Common myeloid progenitor, CD34-positive (primary cell): ENCODE measurements at regions of chr1 and their contacts with region 1.

Region 1: GRCh38 chr1:201511941-201512539 is 5.1 kb upstream of the CSRP1 start:
- DNase-seq: peak in 2 of 3 donors; percentile 19 to 23
- H3K4me3 ChIP-seq: no peak overlapping the region
- H3K27ac ChIP-seq: no peak overlapping the region
- H3K4me1 ChIP-seq: peaks cover 0 to 30% (median 22%) of the 10 kb centered on the region in 4 experiments
- H3K27me3 ChIP-seq: no peaks in the 10 kb centered on the region

Region 2: GRCh38 chr1:201436393-201436792 is 75.6 kb before region 1 on chr1:
- CTCF ChIA-PET with region 1: interaction called, 30 read pairs
- POLR2A ChIA-PET with region 1: interaction called, 4 read pairs
- DNase-seq: no peak
- H3K4me3 ChIP-seq: no peak overlapping the region
- H3K27ac ChIP-seq: no peak overlapping the region
- H3K4me1 ChIP-seq: peaks cover 0 to 5% (median 3%) of the 10 kb centered on the region in 4 experiments
- H3K27me3 ChIP-seq: peaks cover 0 to 3% (median 0%) of the 10 kb centered on the region in 5 experiments

Region 3: DNA sequence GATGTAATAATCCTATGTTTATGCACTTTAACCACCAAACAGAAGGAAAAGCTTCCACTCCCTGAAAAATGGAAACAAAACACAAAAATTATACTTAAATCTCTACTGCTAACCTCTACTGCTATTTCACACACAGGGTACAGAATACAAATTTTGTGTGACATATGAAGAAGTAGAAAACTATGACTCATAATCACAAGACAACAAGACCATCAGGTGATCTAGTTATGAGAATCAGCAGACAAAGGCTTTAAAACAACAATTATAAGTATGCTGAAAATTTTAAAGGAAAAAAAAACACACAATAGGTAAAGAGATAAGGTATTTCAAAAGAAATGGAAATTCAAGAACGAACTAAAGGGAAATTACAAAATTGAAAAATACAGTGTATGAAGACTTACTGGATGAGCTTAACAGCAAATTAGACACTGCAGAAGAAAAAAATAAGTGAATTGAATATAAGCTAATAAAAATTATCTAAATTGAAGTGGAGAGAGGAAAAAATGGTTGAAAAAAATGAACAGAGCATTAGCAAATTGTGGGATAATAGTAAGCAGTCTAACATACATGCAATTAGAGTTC is 13.2 kb after region 1 on chr1:
- CTCF ChIA-PET with region 1: interaction called, 52 read pairs
- POLR2A ChIA-PET with region 1: no interaction called
- DNase-seq: peak in 2 of 3 donors; percentile 26 to 53
- H3K4me3 ChIP-seq: no peak overlapping the region
- H3K27ac ChIP-seq: no peak overlapping the region
- H3K4me1 ChIP-seq: no peaks in the 10 kb centered on the region
- H3K27me3 ChIP-seq: no peaks in the 10 kb centered on the region

Region 4: GRCh38 chr1:201530741-201531531 is 18.9 kb after region 1 on chr1:
- CTCF ChIA-PET with region 1: interaction called, 52 read pairs
- POLR2A ChIA-PET with region 1: no interaction called
- DNase-seq: peak; percentile 77 to 83 (median 79)
- H3K4me3 ChIP-seq: peak overlapping the region in 1 of 7 experiments; percentile 14
- H3K27ac ChIP-seq: no peak overlapping the region
- H3K4me1 ChIP-seq: peaks cover 0 to 38% (median 29%) of the 10 kb centered on the region in 4 experiments
- H3K27me3 ChIP-seq: no peaks in the 10 kb centered on the region

Region 5: GRCh38 chr1:201714542-201715276 is 202.7 kb after region 1 on chr1:
- CTCF ChIA-PET with region 1: no interaction called
- POLR2A ChIA-PET with region 1: no interaction called
- DNase-seq: peak in 2 of 3 donors; percentile 56
- H3K4me3 ChIP-seq: no peak overlapping the region
- H3K27ac ChIP-seq: no peak overlapping the region
- H3K4me1 ChIP-seq: peaks cover 5 to 41% (median 20%) of the 10 kb centered on the region in 4 experiments
- H3K27me3 ChIP-seq: no peaks in the 10 kb centered on the region